ENCODE measurements at regions of chr4 and their contacts with region 1.

Region 1: DNA sequence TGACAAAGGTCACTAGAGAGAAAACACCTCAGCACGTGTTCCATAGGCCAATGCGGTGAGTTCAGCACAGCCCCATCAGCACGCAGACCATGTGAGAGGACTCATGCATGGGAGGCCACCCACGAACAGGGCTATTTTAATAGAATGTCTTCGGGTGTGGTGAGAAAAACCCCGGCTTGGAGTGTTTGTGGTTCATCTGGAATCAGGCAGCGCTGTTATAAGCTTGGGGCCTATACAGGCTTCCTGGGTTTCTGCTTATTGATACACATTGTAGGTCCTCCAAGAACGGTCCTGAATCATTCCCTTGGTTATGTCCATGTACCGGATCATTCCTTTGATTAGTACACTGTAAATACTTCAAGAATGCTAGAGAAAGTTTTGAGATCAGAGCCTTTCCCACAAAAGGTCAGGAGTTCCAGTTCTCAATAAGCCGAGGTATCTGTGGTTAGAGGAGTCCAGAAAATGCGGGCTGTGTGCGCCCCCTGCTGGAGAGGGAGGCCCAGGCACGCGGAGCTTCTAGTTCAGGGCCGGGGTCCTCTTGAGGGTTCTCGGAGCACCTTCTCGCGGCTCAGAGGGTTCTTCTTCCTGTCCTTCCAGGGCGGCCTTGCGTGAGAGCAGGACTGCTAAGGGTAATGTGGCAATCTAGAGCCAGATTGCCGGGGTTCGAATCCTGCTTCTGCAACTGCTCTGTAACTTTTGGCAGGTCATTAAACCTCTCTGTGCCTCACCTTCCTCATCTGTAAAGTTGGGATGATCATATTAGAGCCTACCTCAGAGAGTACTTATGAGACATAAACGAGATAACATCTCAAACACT is 51.8 kb downstream of the TLR10 start:
- DNase-seq: peak; percentile 70 to 93 (median 84)
- H3K4me3 ChIP-seq: no peak overlapping the region
- H3K27ac ChIP-seq: no peak overlapping the region
- H3K4me1 ChIP-seq: no peaks in the 10 kb centered on the region
- H3K27me3 ChIP-seq: no peaks in the 10 kb centered on the region
- CTCF ChIP-seq: peak in 5 of 6 experiments; percentile 87 to 96 (median 96)
- POLR2A ChIP-seq: no peak

Region 2: DNA sequence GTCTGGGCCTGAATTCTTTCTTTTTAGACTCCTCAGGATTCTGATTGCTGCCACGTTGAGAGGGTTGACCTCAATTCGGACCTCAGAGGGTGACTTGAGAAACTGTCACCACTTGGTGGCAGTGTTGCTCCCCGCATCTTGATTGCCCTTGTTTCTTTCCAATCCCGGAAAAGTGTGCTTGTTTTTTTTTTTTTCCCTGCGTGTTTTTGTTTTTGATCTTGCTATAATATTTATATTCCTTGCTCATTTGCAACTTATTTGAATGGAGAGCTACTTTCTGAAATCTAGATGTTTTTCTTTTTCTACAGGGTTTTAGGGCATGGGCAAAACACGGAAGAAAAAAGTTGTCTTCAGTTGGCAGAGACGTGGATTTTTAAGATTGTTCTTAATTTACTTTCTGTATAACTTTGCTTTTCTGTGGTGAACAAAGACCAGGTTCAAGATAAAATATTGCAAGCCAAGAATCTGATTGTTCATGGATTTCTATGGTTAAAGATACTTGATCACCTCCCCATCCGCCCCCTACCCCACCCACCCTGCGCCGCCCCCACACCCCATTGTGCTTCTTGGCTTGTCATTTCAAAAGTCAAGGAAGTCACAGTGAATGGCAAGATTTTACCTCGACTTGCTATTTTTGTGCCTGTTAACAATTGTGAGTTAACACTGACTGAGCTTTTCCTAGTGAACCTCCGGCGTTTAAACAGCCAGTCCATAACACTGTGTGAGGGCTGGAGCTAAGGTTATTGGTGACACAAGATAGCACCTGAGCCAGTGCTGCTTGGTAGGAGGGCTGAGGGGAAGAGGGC is 668.7 kb before region 1 on chr4:
- intact Hi-C with region 1: loop called (anchors 5 kb)
- DNase-seq: peak; percentile 69 to 95 (median 85)
- H3K4me3 ChIP-seq: peak overlapping the region in 2 of 4 donors; percentile 5 to 51
- H3K27ac ChIP-seq: peak overlapping the region in 1 of 5 donors; percentile 17
- H3K4me1 ChIP-seq: peaks cover 0 to 4% of the 10 kb centered on the region in 2 donors
- H3K27me3 ChIP-seq: no peaks in the 10 kb centered on the region
- CTCF ChIP-seq: peak; percentile 72 to 94 (median 84)
- POLR2A ChIP-seq: no peak

Region 3: GRCh38 chr4:38069271-38069760 is 661.7 kb before region 1 on chr4:
- intact Hi-C with region 1: loop called (anchors 5 kb)
- DNase-seq: peak; percentile 44 to 85 (median 75)
- H3K4me3 ChIP-seq: no peak overlapping the region
- H3K27ac ChIP-seq: peak overlapping the region in 3 of 5 donors; percentile 24 to 55 (median 35)
- H3K4me1 ChIP-seq: peaks cover 0 to 23% of the 10 kb centered on the region in 2 donors
- H3K27me3 ChIP-seq: no peaks in the 10 kb centered on the region
- CTCF ChIP-seq: peak; percentile 18 to 62 (median 52)
- POLR2A ChIP-seq: peak in 1 of 2 donors; percentile 52

Region 4: DNA sequence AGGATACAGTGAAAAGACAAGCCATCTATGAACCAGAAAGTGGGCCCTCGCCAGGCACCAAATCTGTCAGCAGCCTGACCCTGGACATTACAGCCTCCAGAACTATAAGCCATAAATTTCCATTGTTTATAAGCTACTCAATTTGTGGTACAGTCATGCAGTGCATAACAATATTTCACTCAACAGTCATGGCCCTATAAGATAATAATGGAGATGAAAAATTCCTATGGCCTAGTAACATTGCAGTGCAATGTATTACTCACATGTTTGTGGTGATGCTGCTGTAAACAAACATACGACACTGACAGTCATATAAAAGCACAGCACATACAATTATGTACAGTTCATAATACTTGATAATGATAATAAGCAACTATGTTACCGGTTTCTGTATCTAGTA is 90.7 kb after region 1 on chr4:
- intact Hi-C with region 1: no loop called
- DNase-seq: no peak
- H3K4me3 ChIP-seq: no peak overlapping the region
- H3K27ac ChIP-seq: no peak overlapping the region
- H3K4me1 ChIP-seq: no peaks in the 10 kb centered on the region
- H3K27me3 ChIP-seq: no peaks in the 10 kb centered on the region
- CTCF ChIP-seq: no peak
- POLR2A ChIP-seq: no peak